GM12878 (cell line): ENCODE measurements at regions of chr1 and their contacts with region 1.

Region 1: GRCh38 chr1:151156515-151156819 is at the start of gene TNFAIP8L2:
- DNase-seq: peak; percentile 32
- ATAC-seq: peak; percentile 96
- H3K4me3 ChIP-seq: peak within 1 kb of the TSS; percentile 85
- H3K27ac ChIP-seq: peak within 1 kb of the TSS; percentile 81
- H3K4me1 ChIP-seq: peaks cover 30% of the 10 kb centered on the region
- H3K27me3 ChIP-seq: no peaks in the 10 kb centered on the region
- CTCF ChIP-seq: no peak
- EP300 ChIP-seq: no peak
- POLR2A ChIP-seq: peak; percentile 30; the same call in 1 of the 2 replicates
- RAD21 ChIP-seq: no peak
- polyA plus RNA-seq, gene TNFAIP8L2: 23.9 to 26.3 TPM

Region 2: DNA sequence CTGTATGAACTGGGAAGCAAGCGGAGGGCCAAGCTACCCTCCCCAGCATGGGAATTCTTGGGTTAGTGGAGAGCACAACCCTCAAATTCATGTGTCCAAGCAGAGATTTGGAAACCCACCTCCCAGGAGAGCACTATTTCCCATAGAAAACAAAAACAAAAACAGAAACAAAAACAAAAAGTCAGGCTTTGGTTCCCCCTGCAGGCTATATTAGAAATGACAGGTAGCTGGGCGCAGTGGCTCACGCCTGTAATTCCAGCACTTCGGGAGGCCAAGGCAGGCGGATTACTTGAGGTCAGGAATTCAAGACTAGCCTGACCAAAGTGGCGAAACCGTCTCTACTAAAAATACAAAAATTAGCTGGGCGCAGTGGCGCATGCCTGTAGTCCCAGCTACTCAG is 160.6 kb before region 1 on chr1:
- CTCF ChIA-PET with region 1: interaction called, 12 read pairs
- POLR2A ChIA-PET with region 1: no interaction called
- RAD21 ChIA-PET with region 1: no interaction called
- SMC1A ChIA-PET with region 1: interaction called, 4 read pairs
- in situ Hi-C with region 1: no loop called
- intact Hi-C with region 1: no loop called
- DNase-seq: no peak
- ATAC-seq: peak; percentile 68
- H3K4me3 ChIP-seq: no peak overlapping the region
- H3K27ac ChIP-seq: no peak overlapping the region
- H3K4me1 ChIP-seq: no peaks in the 10 kb centered on the region
- H3K27me3 ChIP-seq: no peaks in the 10 kb centered on the region
- CTCF ChIP-seq: peak; percentile 46 to 59 (median 50)
- EP300 ChIP-seq: no peak
- POLR2A ChIP-seq: no peak
- RAD21 ChIP-seq: peak; percentile 56

Region 3: DNA sequence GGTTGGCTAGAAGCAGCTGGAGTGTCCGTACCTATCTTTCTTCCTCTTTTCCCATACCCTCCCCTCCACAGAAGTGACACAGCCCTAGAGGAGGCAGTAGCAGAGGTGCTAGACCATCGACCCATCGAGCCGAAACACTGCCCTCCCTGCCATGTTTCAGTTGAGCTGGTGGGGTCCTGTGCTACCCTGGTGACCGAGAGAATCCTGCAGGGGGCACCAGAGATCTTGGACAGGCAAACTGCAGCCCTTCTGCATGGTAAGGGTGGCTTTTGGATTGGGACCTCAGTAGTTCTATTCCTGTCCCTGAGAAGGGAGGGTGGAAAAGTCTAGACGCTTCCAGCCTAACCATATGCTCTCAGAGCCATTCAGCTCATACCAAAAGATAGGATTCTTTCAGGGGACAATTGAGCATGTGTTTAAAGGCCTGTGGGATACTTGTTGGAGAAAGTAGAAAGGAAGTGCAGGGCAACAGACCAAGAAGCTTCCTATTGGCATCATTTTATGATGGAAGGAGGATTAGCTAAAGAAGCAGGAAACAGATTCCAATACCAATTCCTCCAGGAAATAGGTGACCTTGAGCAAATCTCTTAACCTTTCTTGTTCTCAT is 131.8 kb before region 1 on chr1:
- CTCF ChIA-PET with region 1: interaction called, 51 read pairs
- POLR2A ChIA-PET with region 1: no interaction called
- RAD21 ChIA-PET with region 1: interaction called, 15 read pairs
- SMC1A ChIA-PET with region 1: interaction called, 23 read pairs
- in situ Hi-C with region 1: loop called (anchors 5 kb)
- intact Hi-C with region 1: loop called (anchors 1 kb)
- DNase-seq: no peak
- ATAC-seq: peak; percentile 100
- H3K4me3 ChIP-seq: no peak overlapping the region
- H3K27ac ChIP-seq: no peak overlapping the region
- H3K4me1 ChIP-seq: no peaks in the 10 kb centered on the region
- H3K27me3 ChIP-seq: no peaks in the 10 kb centered on the region
- CTCF ChIP-seq: peak; percentile 79 to 91 (median 84)
- EP300 ChIP-seq: no peak
- POLR2A ChIP-seq: no peak
- RAD21 ChIP-seq: peak; percentile 86

Region 4: GRCh38 chr1:151070474-151071276 is 85.8 kb before region 1 on chr1 and contains the start of gene GABPB2:
- CTCF ChIA-PET with region 1: interaction called, 26 read pairs
- POLR2A ChIA-PET with region 1: interaction called, 5 read pairs
- RAD21 ChIA-PET with region 1: interaction called, 26 read pairs
- SMC1A ChIA-PET with region 1: interaction called, 7 read pairs
- in situ Hi-C with region 1: no loop called
- intact Hi-C with region 1: loop called (anchors 1 kb)
- DNase-seq: peak; percentile 72
- ATAC-seq: peak; percentile 97
- H3K4me3 ChIP-seq: peak within 1 kb of the TSS; percentile 99
- H3K27ac ChIP-seq: peak within 1 kb of the TSS; percentile 100
- H3K4me1 ChIP-seq: peaks cover 8% of the 10 kb centered on the region
- H3K27me3 ChIP-seq: no peaks in the 10 kb centered on the region
- CTCF ChIP-seq: peak; percentile 82 to 98 (median 85)
- EP300 ChIP-seq: no peak
- POLR2A ChIP-seq: peak; percentile 92
- RAD21 ChIP-seq: peak; percentile 29; the same call in 1 of the 2 replicates
- polyA plus RNA-seq, gene GABPB2: 2.3 to 2.6 TPM

Region 5: DNA sequence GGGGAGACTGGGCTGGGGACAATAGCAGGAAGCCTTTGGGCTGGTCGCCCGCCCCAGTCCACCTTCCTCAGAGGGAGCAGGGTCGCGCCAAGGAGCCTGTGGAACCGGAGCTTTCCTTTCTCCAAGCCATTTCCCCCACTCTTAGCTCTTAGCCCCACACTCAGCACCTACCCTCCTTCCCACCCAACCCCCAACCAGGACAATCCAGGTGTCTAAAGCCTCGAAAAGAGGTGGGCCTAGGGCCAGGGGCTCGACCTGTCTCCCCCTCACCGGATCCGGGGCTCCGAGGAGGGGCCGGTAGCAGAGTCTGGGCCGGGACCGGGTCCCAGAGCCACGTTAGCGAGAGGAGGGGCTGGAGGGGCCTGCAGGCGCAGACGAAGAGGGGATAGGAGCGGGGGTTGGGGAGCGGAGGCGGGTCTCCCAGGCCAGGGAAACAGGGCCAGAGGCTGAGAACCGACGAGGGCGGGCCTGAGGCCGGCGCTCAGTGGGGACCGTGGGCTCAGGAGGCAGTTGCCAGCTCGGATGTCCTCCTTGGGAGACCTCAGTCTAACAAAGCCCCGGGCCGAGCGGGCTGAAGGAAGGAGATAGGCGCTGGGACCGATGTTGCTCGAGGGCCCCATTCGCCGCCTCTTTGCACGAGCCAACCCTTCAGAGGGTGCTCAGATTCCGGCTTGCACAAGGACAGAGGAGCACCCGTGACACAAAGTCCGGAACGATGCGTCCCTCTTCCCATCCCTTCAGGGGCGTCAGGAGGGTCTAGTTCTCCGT is 11.0 kb before region 1 on chr1:
- CTCF ChIA-PET with region 1: interaction called, 16 read pairs
- POLR2A ChIA-PET with region 1: no interaction called
- RAD21 ChIA-PET with region 1: interaction called, 13 read pairs
- SMC1A ChIA-PET with region 1: interaction called, 6 read pairs
- in situ Hi-C with region 1: no loop called
- intact Hi-C with region 1: no loop called
- DNase-seq: no peak
- ATAC-seq: no peak
- H3K4me3 ChIP-seq: 0 out of 2 replicates have a peak overlapping the region, but pooled peaks have one; percentile 83
- H3K27ac ChIP-seq: no peak overlapping the region
- H3K4me1 ChIP-seq: no peaks in the 10 kb centered on the region; the same call in 1 of the 2 replicates
- H3K27me3 ChIP-seq: peaks cover 0 to 8% of the 10 kb centered on the region in 2 experiments
- CTCF ChIP-seq: no peak
- EP300 ChIP-seq: no peak
- POLR2A ChIP-seq: no peak
- RAD21 ChIP-seq: no peak

Region 6: GRCh38 chr1:151254217-151255213 is 98.0 kb after region 1 on chr1 and contains the start of gene PSMD4:
- CTCF ChIA-PET with region 1: interaction called, 24 read pairs
- POLR2A ChIA-PET with region 1: interaction called, 3 read pairs
- RAD21 ChIA-PET with region 1: interaction called, 19 read pairs
- SMC1A ChIA-PET with region 1: interaction called, 11 read pairs
- in situ Hi-C with region 1: no loop called
- intact Hi-C with region 1: loop called (anchors 2 kb)
- DNase-seq: peak; percentile 96
- ATAC-seq: peak; percentile 95
- H3K4me3 ChIP-seq: peak within 1 kb of the TSS; percentile 81
- H3K27ac ChIP-seq: peak within 1 kb of the TSS; percentile 87
- H3K4me1 ChIP-seq: peaks cover 2% of the 10 kb centered on the region; the same call in 1 of the 2 replicates
- H3K27me3 ChIP-seq: no peaks in the 10 kb centered on the region
- CTCF ChIP-seq: no peak
- EP300 ChIP-seq: no peak
- POLR2A ChIP-seq: peak; percentile 94
- RAD21 ChIP-seq: no peak
- polyA plus RNA-seq, gene PSMD4: 129 to 190 TPM